IMR-90 (cell line): ENCODE measurements at regions of chr17 and their contacts with region 1.

Region 1: GRCh38 chr17:1783834-1784611 is 22.2 kb downstream of the SERPINF1 start:
- DNase-seq: peak; percentile 86
- ATAC-seq: peak; percentile 63
- H3K4me3 ChIP-seq: no peak overlapping the region
- H3K27ac ChIP-seq: peak overlapping the region; percentile 11; the same call in 1 of the 2 replicates
- H3K4me1 ChIP-seq: peaks cover 28% of the 10 kb centered on the region
- H3K27me3 ChIP-seq: no peaks in the 10 kb centered on the region
- CTCF ChIP-seq: peak; percentile 80
- POLR2A ChIP-seq: no peak
- RAD21 ChIP-seq: peak; percentile 82

Region 2: DNA sequence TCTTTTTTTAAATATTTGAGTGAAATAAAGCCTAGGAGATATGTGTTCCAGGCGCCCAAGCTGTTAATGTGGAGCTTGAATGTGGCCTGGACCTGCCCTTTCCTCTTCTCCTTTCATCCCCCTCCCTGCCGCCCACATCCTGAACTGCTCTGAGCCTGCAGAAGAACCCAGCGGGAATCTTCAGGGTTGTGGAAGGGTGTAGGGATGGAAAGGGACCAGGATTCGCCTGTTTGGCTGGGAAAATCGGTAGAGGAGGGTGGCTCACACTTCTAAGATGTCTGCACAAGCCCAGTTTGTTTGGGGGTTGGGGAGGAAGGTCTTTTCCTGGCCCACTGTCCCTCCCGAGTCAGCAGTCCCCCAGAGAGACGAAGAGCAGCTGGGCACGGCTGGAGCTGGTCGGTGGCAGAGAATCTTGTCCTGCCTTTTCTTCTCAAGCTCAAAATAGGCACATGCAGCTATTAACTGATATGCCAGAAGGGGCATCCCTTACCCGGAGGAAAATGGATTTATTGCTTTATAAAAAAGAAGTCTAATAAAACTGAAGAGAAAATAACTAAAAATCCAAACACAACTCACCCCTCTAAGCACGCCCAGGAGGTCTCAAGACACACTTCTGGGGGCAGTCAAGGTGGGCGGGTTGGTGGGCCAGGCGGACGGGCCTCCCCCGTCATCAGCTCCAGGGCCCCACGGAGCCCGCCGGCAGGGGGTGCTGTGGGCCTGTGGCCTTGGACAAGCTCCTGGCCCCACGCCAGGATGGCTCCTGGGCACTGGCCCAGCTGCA is 209.9 kb before region 1 on chr17:
- CTCF ChIA-PET with region 1: no interaction called
- POLR2A ChIA-PET with region 1: no interaction called
- dilution Hi-C with region 1: no loop called
- in situ Hi-C with region 1: no loop called
- intact Hi-C with region 1: loop called (anchors 10 kb)
- DNase-seq: peak; percentile 66
- ATAC-seq: peak; percentile 58
- H3K4me3 ChIP-seq: no peak overlapping the region
- H3K27ac ChIP-seq: no peak overlapping the region; the same call in 1 of the 2 replicates
- H3K4me1 ChIP-seq: peaks cover 15% of the 10 kb centered on the region
- H3K27me3 ChIP-seq: no peaks in the 10 kb centered on the region
- CTCF ChIP-seq: peak; percentile 96
- POLR2A ChIP-seq: no peak
- RAD21 ChIP-seq: peak; percentile 91

Region 3: GRCh38 chr17:1648963-1649843 is 134.8 kb before region 1 on chr17:
- CTCF ChIA-PET with region 1: interaction called, 4 read pairs
- POLR2A ChIA-PET with region 1: no interaction called
- dilution Hi-C with region 1: no loop called
- in situ Hi-C with region 1: loop called (anchors 10 kb)
- intact Hi-C with region 1: no loop called
- DNase-seq: peak; percentile 94
- ATAC-seq: peak; percentile 82
- H3K4me3 ChIP-seq: peak overlapping the region; percentile 83
- H3K27ac ChIP-seq: peak overlapping the region; percentile 62
- H3K4me1 ChIP-seq: peaks cover 22% of the 10 kb centered on the region
- H3K27me3 ChIP-seq: no peaks in the 10 kb centered on the region
- CTCF ChIP-seq: peak; percentile 99
- POLR2A ChIP-seq: peak; percentile 57
- RAD21 ChIP-seq: 0 out of 2 replicates have a peak, but pooled peaks have one; percentile 81

Region 4: DNA sequence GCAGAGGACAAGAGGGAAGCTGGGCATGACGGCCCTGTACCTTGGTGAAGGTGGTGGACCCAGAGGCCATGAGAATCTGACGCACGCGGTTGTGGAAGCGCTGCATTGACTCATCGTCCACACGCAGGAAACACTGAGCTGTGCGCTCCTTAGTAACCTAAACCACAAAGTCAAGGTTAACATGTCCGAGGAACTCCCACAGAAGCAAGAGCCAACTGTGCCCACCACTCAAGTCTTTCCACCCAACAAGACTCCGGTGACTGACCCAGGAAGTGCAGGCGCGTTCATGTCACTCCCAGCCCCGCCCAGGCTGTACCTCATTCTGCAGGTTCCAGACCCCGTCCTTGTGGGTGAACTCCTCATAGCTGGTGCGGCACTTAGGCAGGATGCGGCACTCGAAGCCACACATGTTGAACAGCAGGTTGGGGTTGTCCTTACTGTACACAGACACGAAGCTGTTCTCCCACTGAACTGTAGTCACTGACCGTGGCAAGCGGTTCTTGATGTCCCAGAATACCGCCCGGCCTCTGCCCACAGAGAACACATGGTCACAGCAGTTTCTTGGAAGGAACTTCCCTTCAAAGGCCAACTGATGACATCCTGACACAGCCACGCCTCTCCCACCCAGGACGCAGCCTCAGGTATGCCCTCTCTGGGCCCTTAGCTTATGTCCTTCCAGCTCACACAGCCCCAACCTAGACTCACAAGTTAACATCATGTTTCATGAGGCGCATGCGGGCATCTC is 110.8 kb before region 1 on chr17:
- CTCF ChIA-PET with region 1: interaction called, 3 read pairs
- POLR2A ChIA-PET with region 1: no interaction called
- dilution Hi-C with region 1: no loop called
- in situ Hi-C with region 1: no loop called
- intact Hi-C with region 1: loop called (anchors 5 kb)
- DNase-seq: no peak
- ATAC-seq: no peak
- H3K4me3 ChIP-seq: no peak overlapping the region
- H3K27ac ChIP-seq: no peak overlapping the region; the same call in 1 of the 2 replicates
- H3K4me1 ChIP-seq: peaks cover 3% of the 10 kb centered on the region; the same call in 1 of the 2 replicates
- H3K27me3 ChIP-seq: no peaks in the 10 kb centered on the region
- CTCF ChIP-seq: no peak
- POLR2A ChIP-seq: no peak
- RAD21 ChIP-seq: no peak

Region 5: GRCh38 chr17:1703063-1703462 is 81.0 kb before region 1 on chr17:
- CTCF ChIA-PET with region 1: no interaction called
- POLR2A ChIA-PET with region 1: no interaction called
- dilution Hi-C with region 1: no loop called
- in situ Hi-C with region 1: no loop called
- intact Hi-C with region 1: no loop called
- DNase-seq: peak; percentile 37
- ATAC-seq: no peak
- H3K4me3 ChIP-seq: no peak overlapping the region
- H3K27ac ChIP-seq: no peak overlapping the region
- H3K4me1 ChIP-seq: no peaks in the 10 kb centered on the region
- H3K27me3 ChIP-seq: no peaks in the 10 kb centered on the region
- CTCF ChIP-seq: no peak
- POLR2A ChIP-seq: no peak
- RAD21 ChIP-seq: no peak

Region 6: DNA sequence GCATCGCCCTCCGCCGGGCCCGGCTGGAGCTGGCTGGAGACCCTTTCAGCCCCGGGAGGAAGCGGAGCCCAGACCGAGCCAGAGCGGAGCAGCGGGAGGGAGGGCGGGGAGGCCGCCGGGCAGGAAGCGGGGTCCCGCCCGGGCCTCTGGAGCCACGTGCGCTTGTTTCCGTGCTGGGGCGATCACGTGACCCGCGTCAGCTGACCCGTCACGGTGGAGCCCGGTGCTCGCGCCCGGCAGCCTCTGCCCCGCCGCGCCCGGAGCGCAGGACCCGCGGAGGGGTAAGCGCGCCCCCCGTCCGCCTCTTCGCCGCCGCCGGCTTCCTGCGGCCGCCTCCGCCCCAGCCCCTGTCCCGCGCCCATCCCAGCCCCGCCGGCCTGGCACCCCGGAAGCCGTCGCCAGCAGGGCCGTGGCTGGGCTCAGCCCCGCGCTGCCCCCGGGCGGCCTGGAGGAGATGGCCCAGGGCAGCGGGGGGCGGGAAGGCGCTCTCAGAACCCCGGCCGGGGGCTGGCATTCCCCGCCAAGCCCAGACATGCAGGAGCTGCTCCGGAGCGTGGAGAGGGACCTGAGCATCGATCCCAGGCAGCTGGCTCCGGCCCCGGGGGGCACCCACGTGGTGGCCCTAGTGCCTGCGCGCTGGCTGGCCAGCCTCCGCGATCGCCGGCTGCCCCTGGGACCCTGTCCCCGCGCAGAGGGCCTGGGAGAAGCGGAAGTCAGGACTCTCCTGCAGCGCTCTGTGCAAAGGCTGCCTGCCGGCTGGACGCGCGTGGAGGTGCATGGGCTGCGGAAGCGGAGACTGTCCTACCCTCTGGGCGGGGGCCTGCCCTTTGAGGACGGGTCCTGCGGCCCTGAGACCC is 59.3 kb before region 1 on chr17 and contains the start of gene WDR81:
- CTCF ChIA-PET with region 1: interaction called, 31 read pairs
- POLR2A ChIA-PET with region 1: no interaction called
- dilution Hi-C with region 1: no loop called
- in situ Hi-C with region 1: loop called (anchors 5 kb)
- intact Hi-C with region 1: loop called (anchors 1 kb)
- DNase-seq: peak; percentile 79
- ATAC-seq: peak; percentile 78
- H3K4me3 ChIP-seq: peak within 1 kb of the TSS; percentile 70
- H3K27ac ChIP-seq: peak within 1 kb of the TSS; percentile 94
- H3K4me1 ChIP-seq: peaks cover 11% of the 10 kb centered on the region
- H3K27me3 ChIP-seq: no peaks in the 10 kb centered on the region
- CTCF ChIP-seq: peak; percentile 18; the same call in 1 of the 2 replicates
- POLR2A ChIP-seq: no peak
- RAD21 ChIP-seq: no peak
- total RNA-seq, gene WDR81: 3.0 and 3.9 TPM in 2 replicates